ENCODE measurements at regions of chr17 and their contacts with region 1.

Region 1: DNA sequence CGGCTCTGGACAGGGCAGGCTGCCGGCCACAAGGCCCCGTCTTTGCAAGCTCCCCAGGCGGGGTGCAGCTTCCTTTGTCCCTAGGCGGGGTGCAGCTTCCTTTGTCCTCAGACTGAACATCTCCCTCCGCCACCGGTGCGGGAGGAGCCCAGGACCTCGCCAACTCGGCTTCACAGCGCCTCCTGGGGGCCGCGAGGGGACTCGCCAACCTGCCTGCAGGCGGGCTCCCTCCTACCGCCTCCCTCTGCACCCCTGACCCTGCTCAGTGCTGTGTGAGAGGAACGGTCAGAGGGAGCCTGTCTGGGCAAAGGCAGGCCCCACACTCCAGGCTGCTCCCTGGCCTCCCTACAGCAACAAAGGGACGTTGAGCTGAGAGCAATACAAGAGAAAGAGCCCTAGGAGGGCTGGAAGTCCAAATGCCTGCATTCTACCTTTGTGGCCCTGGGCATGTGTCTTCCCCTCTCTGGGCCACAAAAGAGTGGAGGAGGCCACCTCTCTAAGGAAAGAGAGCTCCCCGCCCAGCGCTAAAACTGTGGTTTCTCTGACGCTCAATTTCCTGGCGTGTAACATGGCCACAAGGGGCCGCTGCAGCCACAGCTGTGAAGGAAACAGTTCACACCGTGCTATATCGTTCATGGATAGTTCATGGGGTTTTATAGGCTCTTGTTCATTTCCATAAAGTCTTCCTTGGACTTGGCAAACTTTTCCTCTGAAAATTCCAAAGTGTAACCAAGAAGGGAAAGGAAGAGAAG is 20.9 kb upstream of the KRT19 start:
- DNase-seq: peak; percentile 82 to 88 (median 84)
- H3K4me3 ChIP-seq: peak overlapping the region in 1 of 2 donors; percentile 29
- H3K4me3 Mint-ChIP-seq: peak overlapping the region; percentile 27 to 78 (median 64)
- H3K27ac ChIP-seq: peak overlapping the region; percentile 30
- H3K27ac Mint-ChIP-seq: peak overlapping the region; percentile 68 to 84 (median 80)
- H3K4me1 ChIP-seq: peaks cover 17% of the 10 kb centered on the region
- H3K4me1 Mint-ChIP-seq: peaks cover 5 to 20% (median 15%) of the 10 kb centered on the region in 4 donors
- H3K27me3 ChIP-seq: no peaks in the 10 kb centered on the region
- H3K27me3 Mint-ChIP-seq: peaks cover 10 to 11% of the 10 kb centered on the region in 2 donors

Region 2: GRCh38 chr17:40803617-40804082 is 745.4 kb before region 1 on chr17:
- CTCF ChIA-PET with region 1: interaction called, 8 read pairs
- POLR2A ChIA-PET with region 1: no interaction called
- intact Hi-C with region 1: loop called (anchors 1 kb)
- DNase-seq: peak; percentile 59 to 75 (median 62)
- H3K4me3 ChIP-seq: no peak overlapping the region
- H3K4me3 Mint-ChIP-seq: no peak overlapping the region
- H3K27ac ChIP-seq: no peak overlapping the region
- H3K27ac Mint-ChIP-seq: no peak overlapping the region
- H3K4me1 ChIP-seq: peaks cover 4% of the 10 kb centered on the region
- H3K4me1 Mint-ChIP-seq: peaks cover 2 to 4% (median 3%) of the 10 kb centered on the region in 4 donors
- H3K27me3 ChIP-seq: peaks cover 11% of the 10 kb centered on the region
- H3K27me3 Mint-ChIP-seq: peaks cover 19 to 34% of the 10 kb centered on the region in 2 donors

Region 3: DNA sequence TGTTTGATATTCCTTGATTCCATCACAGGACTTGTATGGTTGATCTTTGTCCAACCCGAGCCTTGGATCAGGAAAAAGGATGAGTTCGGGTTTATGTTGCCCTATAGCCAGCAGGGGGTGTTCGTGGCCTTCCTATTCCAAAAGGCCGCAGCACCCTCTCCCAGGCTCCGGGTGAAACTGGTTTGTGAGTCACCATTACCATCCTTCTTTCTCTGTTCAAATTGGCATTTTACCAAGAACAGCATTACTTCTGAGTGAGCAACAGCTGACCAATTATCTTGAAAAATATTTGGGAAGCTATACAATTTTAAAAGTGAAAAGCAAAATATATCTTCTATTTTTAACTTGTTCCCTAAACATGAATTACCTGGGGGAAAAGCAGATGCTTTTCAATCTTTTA is 639.7 kb before region 1 on chr17:
- CTCF ChIA-PET with region 1: interaction called, 51 read pairs
- POLR2A ChIA-PET with region 1: no interaction called
- intact Hi-C with region 1: no loop called
- DNase-seq: peak; percentile 48 to 69 (median 60)
- H3K4me3 ChIP-seq: no peak overlapping the region
- H3K4me3 Mint-ChIP-seq: no peak overlapping the region
- H3K27ac ChIP-seq: no peak overlapping the region
- H3K27ac Mint-ChIP-seq: no peak overlapping the region
- H3K4me1 ChIP-seq: no peaks in the 10 kb centered on the region
- H3K4me1 Mint-ChIP-seq: no peaks in the 10 kb centered on the region
- H3K27me3 ChIP-seq: no peaks in the 10 kb centered on the region
- H3K27me3 Mint-ChIP-seq: peaks cover 23 to 39% of the 10 kb centered on the region in 2 donors

Region 4: DNA sequence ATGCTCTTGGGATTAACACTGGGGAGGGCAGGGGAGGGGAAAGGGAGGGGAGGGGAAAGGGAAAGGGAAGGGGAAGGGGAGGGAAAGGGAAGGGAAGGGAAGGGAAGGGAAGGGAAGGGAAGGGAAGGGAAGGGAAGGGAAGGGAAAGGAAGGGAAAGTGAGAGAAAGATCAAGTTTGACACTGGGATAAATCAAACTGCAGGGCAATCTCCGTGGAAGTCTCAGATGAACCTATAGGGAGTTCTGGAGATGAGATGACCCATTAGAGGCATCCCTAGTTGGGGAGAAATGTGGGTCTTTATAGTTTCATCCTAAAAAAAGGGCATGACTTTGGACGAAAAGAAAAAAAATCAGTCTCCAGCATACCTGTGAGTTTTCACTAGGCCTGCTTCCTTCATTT is 427.3 kb before region 1 on chr17:
- CTCF ChIA-PET with region 1: interaction called, 11 read pairs
- POLR2A ChIA-PET with region 1: no interaction called
- intact Hi-C with region 1: loop called (anchors 2 kb)
- DNase-seq: no peak
- H3K4me3 ChIP-seq: no peak overlapping the region
- H3K4me3 Mint-ChIP-seq: no peak overlapping the region
- H3K27ac ChIP-seq: no peak overlapping the region
- H3K27ac Mint-ChIP-seq: peak overlapping the region in 1 of 7 donors; percentile 12
- H3K4me1 ChIP-seq: peaks cover 54% of the 10 kb centered on the region
- H3K4me1 Mint-ChIP-seq: peaks cover 13 to 68% (median 50%) of the 10 kb centered on the region in 4 donors
- H3K27me3 ChIP-seq: no peaks in the 10 kb centered on the region
- H3K27me3 Mint-ChIP-seq: peaks cover 2 to 4% of the 10 kb centered on the region in 2 donors

Region 5: DNA sequence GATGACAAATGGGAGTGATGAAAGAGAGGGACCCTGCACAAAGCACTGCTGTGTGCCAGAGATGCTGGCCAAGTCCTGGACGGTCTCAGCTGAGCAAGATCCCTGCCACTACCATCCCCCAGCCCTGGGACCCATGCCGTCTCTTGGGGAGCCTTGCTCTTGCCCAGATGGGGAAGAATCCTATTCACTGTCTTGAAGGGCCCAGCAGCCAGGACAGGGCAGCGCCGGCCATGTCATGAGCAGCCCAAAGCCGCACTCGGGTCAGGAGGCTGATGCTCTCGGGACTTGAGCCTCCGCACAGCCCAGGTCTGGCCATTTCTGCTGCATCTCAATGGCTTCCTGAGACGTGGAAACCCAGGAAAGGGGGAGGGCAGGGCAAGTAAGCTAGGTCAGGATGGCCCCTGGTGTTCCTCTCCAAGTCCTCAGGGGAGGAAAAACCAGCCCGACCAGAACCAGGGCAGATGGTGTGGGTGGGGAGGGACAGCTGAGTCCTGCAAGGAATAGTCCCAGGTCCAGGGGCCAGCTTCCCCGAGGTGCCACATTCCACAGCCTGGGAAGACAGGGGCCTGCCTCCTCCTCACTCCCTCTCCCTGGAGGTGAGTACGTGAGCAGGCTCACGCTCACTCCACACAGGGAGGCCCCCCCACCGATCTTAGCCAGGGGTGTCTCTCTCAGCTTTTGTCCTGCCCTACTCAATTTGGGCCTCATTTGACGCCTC is 13.1 kb before region 1 on chr17:
- CTCF ChIA-PET with region 1: interaction called, 18 read pairs
- POLR2A ChIA-PET with region 1: no interaction called
- intact Hi-C with region 1: no loop called
- DNase-seq: no peak
- H3K4me3 ChIP-seq: no peak overlapping the region
- H3K4me3 Mint-ChIP-seq: no peak overlapping the region
- H3K27ac ChIP-seq: no peak overlapping the region
- H3K27ac Mint-ChIP-seq: no peak overlapping the region
- H3K4me1 ChIP-seq: no peaks in the 10 kb centered on the region
- H3K4me1 Mint-ChIP-seq: peaks cover 0 to 2% (median 0%) of the 10 kb centered on the region in 4 donors
- H3K27me3 ChIP-seq: peaks cover 3% of the 10 kb centered on the region
- H3K27me3 Mint-ChIP-seq: peaks cover 16 to 29% of the 10 kb centered on the region in 2 donors

Region 6: DNA sequence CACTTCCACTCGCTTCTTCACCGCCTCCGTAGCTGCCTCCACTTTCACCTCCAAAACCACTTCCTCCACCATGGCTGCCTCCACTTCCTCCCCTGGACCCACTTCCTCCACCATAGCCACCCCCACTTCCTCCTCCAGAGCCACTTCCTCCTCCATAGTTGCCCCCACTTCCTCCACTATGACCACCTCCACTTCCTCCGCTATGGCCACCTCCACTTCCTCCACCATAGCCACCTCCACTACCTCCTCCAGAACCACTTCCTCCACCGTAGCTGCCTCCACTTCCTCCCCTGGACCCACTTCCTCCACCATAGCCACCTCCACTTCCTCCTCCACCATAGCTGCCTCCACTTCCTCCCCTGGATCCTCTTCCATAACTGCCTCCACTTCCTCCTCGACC is 18.3 kb after region 1 on chr17:
- CTCF ChIA-PET with region 1: interaction called, 32 read pairs
- POLR2A ChIA-PET with region 1: interaction called, 3 read pairs
- intact Hi-C with region 1: no loop called
- DNase-seq: peak in 2 of 5 donors; percentile 6 to 12
- H3K4me3 ChIP-seq: no peak overlapping the region
- H3K4me3 Mint-ChIP-seq: peak overlapping the region in 1 of 8 donors; percentile 15
- H3K27ac ChIP-seq: no peak overlapping the region
- H3K27ac Mint-ChIP-seq: peak overlapping the region in 5 of 7 donors; percentile 27 to 87 (median 84)
- H3K4me1 ChIP-seq: peaks cover 5% of the 10 kb centered on the region
- H3K4me1 Mint-ChIP-seq: peaks cover 3 to 18% (median 11%) of the 10 kb centered on the region in 4 donors
- H3K27me3 ChIP-seq: peaks cover 7% of the 10 kb centered on the region
- H3K27me3 Mint-ChIP-seq: peaks cover 4 to 10% of the 10 kb centered on the region in 2 donors

Region 7: DNA sequence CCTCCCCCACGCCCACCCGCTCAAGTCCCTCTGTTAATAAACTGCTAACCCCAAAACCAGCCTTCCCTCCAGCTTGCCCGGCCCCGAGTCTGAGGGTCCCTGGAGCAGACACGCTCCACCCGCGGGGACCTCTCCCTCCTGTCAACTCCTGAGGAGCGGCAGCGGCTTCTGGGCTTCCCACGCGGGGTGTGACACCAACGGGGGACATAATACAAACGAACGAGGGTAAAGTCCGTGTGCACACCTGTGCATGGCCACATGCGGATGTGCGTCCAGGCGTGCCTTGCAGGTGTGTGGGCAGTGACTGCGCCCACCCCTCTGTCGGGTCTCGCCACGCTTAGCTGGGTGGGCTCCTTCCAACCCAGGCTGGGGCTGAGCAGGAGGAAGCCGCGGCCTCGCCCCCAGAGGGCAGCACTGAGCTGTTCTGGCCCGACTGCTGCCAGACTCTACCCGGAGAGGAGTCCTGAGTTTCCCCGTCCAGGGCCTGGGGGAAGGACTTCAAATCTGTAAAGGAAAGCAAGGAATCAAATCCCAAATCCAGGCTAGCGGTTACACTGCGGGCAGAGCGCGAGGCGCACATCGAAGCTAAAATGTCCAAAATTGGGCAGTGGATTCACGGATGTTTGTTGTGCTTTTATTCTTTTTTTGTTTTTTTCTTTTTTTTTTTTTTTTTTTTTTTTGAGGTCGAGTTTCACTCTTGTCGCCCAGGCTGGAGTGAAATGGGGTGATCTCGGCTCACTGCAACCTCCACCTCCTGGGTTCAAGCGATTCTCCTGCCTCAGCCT is 99.6 kb after region 1 on chr17:
- CTCF ChIA-PET with region 1: interaction called, 74 read pairs
- POLR2A ChIA-PET with region 1: interaction called, 12 read pairs
- intact Hi-C with region 1: no loop called
- DNase-seq: peak; percentile 75 to 84 (median 81)
- H3K4me3 ChIP-seq: peak overlapping the region; percentile 50 to 76
- H3K4me3 Mint-ChIP-seq: peak overlapping the region; percentile 74 to 91 (median 82)
- H3K27ac ChIP-seq: peak overlapping the region; percentile 49
- H3K27ac Mint-ChIP-seq: peak overlapping the region in 6 of 7 donors; percentile 64 to 92 (median 86)
- H3K4me1 ChIP-seq: peaks cover 13% of the 10 kb centered on the region
- H3K4me1 Mint-ChIP-seq: peaks cover 2 to 11% (median 8%) of the 10 kb centered on the region in 4 donors
- H3K27me3 ChIP-seq: no peaks in the 10 kb centered on the region
- H3K27me3 Mint-ChIP-seq: peaks cover 0 to 2% of the 10 kb centered on the region in 2 donors